Esophagus muscularis mucosa (tissue), 4 donors: ENCODE measurements at regions of chr5 and their contacts with region 1.

Region 1: DNA sequence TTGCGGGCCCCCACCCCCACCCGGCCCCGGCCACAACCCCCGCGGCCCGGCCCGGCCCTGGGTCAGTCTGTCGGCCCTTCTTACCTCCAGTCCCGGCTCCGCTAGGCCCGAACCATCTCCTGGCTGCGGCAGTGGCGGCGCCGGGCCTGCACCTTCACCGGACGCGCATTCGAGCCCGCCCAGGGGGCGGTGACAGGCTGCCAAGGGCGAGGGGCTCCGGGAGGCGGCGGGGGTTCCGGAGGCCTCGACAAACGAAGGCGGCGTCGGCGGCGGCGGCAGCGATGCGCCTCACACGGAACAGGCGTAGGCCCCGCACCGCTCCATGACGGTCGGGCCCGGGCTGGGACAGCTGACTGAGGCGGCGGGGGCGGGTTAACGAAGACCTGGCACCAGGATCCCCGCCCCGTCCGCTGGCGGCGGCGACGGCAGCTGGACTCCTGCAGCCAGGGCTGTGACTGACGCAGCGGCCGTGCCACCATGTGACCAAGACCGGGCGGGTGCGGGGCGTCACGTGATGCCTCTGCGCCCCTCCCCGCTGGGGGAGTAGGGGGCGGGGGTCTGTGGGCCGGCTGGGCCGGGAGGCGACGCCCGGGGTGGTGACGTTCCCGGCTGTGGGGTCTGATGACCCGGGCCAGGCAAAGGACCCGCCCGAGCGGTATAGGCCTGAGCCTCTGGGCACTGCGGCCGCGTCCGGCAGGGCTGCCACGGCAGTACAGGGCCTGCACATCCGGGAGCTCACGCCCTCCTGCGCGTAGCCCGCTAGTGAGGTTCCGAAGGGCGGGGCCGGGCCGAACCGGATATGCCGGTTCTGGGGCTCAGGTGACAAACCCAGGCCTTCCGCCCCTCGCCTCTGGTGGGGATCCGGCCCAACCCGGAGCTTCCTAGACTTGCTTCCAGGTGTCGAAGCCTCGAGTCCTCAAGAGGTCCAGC is at the start of gene AFF4:
- DNase-seq: peak; percentile 99
- H3K4me3 ChIP-seq: peak within 1 kb of the TSS; percentile 73 to 99 (median 86)
- H3K27ac ChIP-seq: peak within 1 kb of the TSS; percentile 97 to 100 (median 100)
- H3K4me1 ChIP-seq: peaks cover 10 to 45% (median 42%) of the 10 kb centered on the region in 4 donors
- H3K27me3 ChIP-seq: peaks cover 0 to 4% (median 0%) of the 10 kb centered on the region in 4 donors
- CTCF ChIP-seq: peak in 1 of 3 experiments; percentile 4
- EP300 ChIP-seq: no peak
- POLR2A ChIP-seq: peak; percentile 96
- total RNA-seq, gene AFF4: 56.1 to 74.1 (median 63.0) TPM

Region 2: GRCh38 chr5:133025804-133026663 is 62.6 kb after region 1 on chr5 and contains the start of gene ZCCHC10:
- intact Hi-C with region 1: loop called (anchors 10 kb)
- DNase-seq: peak; percentile 97
- H3K4me3 ChIP-seq: peak within 1 kb of the TSS; percentile 72 to 97 (median 84)
- H3K27ac ChIP-seq: peak within 1 kb of the TSS; percentile 92 to 97 (median 94)
- H3K4me1 ChIP-seq: peaks cover 12 to 29% (median 18%) of the 10 kb centered on the region in 4 donors
- H3K27me3 ChIP-seq: no peaks in the 10 kb centered on the region
- CTCF ChIP-seq: no peak
- EP300 ChIP-seq: no peak
- POLR2A ChIP-seq: peak; percentile 12
- total RNA-seq, gene ZCCHC10: 8.6 to 40.8 (median 13.1) TPM

Region 3: DNA sequence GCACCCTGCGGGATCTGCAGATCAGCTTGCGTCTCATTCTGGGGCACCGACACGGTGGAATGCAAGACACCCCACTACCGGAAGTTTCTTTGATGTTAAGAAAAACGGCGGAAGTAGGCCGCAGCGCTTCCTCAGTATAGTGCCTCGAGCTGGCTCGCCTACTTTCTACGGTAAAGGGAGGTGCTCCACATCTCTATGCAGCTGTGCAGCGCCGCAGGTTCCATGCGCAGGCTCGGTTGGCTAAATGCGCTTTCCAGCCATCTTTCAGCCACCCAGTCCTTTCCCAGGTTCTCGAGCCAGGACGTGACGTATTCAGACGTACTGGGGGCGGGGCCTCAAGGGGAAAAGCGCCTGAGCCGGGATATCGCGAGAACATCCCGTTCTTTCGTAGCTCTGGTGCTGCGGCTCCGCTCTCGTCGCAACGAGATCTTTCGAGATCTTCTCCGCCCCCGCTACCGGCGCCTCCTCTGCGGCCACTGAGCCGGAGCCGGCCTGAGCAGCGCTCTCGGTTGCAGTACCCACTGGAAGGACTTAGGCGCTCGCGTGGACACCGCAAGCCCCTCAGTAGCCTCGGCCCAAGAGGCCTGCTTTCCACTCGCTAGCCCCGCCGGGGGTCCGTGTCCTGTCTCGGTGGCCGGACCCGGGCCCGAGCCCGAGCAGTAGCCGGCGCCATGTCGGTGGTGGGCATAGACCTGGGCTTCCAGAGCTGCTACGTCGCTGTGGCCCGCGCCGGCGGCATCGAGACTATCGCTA is 88.3 kb after region 1 on chr5 and contains the start of gene HSPA4:
- intact Hi-C with region 1: loop called (anchors 5 kb)
- DNase-seq: peak; percentile 99
- H3K4me3 ChIP-seq: peak within 1 kb of the TSS; percentile 68 to 99 (median 87)
- H3K27ac ChIP-seq: peak within 1 kb of the TSS; percentile 95 to 99 (median 98)
- H3K4me1 ChIP-seq: peaks cover 36 to 72% (median 58%) of the 10 kb centered on the region in 4 donors
- H3K27me3 ChIP-seq: no peaks in the 10 kb centered on the region
- CTCF ChIP-seq: peak in 1 of 3 experiments; percentile 11
- EP300 ChIP-seq: no peak
- POLR2A ChIP-seq: peak; percentile 80
- total RNA-seq, gene HSPA4: 54.1 to 65.2 (median 55.3) TPM